ENCODE measurements at regions of chr3 and their contacts with region 1.

Region 1: DNA sequence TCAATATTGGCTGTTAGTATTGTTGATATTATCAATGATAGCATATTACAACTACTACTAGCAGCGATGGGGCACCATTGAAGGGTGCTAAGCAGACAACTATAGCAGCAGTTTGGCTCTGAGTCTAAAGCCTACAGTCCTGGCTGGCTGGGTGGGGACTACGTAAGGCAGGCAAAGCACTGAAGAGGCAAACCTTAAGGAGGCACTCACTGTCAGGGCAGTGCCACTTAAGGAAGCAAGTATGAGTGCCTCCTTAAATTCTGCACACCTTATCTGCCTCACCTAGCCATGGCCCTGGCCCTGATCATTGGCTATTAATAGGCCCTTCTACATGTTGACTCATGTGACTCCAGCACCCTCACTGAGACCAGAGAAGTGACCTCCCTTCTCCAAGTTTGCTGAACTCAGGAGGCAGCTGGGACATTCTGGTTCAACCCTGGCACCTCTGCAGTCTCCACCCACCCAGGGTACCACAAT is 20.6 kb downstream of the CDCP1 start:
- DNase-seq: no peak
- ATAC-seq: peak; percentile 68

Region 2: DNA sequence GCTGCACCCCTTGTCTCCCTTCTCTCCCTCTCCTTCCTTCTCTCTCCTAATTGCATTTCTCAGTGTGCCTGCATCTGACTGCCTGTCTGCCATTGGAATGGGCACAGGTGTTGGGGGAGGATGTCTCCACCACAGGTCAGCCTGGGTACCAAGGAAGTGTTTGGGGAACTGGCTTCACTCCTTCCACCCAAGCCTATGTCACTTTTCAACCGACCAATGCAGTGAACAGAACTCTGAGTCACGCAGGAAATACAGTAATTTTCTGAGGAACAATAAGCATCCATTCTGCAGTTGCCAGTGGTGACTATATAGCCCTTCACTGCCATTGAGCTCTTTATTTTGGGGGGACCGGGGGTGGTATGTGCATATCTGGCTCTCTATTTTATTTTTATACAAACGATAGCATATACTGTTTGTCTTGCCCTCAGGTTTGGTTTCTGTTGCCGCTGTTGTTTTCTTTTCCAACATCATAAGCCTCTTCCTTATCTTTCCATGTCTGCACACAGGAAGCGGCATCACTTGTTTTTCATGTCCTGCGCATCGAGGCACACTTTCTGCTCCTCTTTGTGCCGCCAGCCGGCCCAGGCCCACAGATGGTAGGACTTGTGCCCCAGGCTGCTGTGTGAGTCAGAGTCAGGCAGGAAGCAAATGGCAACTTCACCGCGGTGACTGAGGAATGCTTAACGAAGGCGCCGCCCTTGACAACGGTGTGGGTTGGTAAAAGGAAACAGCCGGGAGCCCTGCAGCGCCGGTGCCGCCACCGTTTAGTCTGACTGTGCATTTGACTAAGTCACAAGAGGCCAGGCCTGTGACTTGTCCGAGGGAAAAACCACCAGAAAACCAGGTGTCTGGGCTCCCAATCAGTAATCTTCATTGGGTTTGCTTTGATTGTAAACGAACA is 41.7 kb after region 1 on chr3:
- intact Hi-C with region 1: loop called (anchors 5 kb)
- DNase-seq: peak; percentile 84
- ATAC-seq: peak; percentile 66

Measured in Right ventricle myocardium inferior (tissue), 1 donor.